Activated CD4-positive, alpha-beta T cell treated with anti-CD3 and anti-CD28 coated beads for 36 hours (primary cell): ENCODE measurements at regions of chr16 and their contacts with region 1.

Region 1: GRCh38 chr16:29848420-29849297 is 14.4 kb downstream of the CDIPT start:
- DNase-seq: peak; percentile 93
- ATAC-seq: peak; percentile 97
- H3K4me3 Mint-ChIP-seq: no peak overlapping the region
- H3K27ac Mint-ChIP-seq: no peak overlapping the region
- H3K4me1 Mint-ChIP-seq: peaks cover 7% of the 10 kb centered on the region
- H3K27me3 Mint-ChIP-seq: no peaks in the 10 kb centered on the region

Region 2: DNA sequence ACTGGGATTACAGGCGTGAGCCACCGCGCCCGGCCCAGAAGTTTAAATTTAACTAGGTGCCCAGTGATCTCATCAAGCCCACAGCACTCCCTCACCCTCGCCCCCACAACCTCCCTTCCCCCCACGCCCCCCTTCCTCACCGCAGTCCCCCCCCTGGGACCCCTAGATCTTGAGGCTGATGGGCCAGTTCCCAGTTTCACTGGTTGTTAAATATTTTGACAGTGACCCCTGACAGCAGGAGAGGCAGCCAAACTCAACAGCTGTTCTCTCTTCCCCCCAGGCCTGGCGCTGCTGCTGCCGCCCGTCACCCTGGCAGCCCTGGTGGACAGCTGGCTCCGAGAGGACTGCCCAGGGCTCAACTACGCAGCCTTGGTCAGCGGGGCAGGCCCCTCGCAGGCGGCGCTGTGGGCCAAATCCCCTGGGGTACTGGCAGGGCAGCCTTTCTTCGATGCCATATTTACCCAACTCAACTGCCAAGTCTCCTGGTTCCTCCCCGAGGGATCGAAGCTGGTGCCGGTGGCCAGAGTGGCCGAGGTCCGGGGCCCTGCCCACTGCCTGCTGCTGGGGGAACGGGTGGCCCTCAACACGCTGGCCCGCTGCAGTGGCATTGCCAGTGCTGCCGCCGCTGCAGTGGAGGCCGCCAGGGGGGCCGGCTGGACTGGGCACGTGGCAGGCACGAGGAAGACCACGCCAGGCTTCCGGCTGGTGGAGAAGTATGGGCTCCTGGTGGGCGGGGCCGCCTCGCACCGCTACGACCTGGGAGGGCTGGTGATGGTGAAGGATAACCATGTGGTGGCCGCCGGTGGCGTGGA is 154.1 kb before region 1 on chr16:
- CTCF ChIA-PET with region 1: interaction called, 45 read pairs
- POLR2A ChIA-PET with region 1: no interaction called
- intact Hi-C with region 1: loop called in 1 of 2 experiments (anchors 2 kb)
- DNase-seq: no peak
- ATAC-seq: no peak
- H3K4me3 Mint-ChIP-seq: no peak overlapping the region
- H3K27ac Mint-ChIP-seq: no peak overlapping the region
- H3K4me1 Mint-ChIP-seq: no peaks in the 10 kb centered on the region
- H3K27me3 Mint-ChIP-seq: no peaks in the 10 kb centered on the region

Region 3: DNA sequence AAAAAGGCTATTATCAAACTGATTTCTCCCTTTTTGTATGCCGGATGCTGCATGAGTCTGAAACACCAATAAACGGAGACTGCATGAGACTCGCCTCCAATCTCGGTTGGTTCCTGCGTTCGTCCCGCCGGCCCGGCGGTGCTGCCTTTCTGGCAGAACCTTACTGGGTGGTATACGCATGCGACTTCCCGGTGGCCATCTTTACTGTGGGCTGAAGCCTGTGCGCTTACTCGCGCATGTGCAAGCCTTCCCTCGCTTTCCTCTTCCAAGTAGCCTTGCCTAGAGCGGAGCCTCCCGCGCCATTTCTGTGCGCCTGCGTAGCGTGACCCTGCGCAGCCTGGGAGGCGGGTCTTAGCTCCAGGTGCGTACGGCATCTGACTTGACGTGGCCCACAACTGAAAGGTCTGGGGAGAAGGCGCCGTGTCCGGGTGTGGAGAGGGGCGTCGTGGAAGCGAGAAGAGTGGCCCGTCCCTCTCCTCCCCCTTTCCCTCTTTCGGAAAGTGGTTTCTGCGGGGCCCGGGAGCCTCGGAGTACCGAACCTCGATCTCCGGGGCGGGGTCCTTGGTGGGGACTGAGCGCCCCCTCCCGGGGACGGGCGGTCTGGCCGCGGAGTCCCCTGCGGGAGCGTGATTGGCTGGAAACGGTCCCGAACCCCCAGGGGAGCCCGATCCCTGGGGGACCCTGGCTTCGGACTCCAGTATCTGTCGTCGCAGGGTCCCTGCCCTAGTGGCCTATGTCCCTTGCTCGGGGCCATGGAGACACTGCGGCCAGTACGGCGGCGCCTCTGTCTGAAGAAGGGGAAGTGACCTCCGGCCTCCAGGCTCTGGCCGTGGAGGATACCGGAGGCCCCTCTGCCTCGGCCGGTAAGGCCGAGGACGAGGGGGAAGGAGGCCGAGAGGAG is 32.6 kb before region 1 on chr16 and contains the start of gene PAGR1:
- CTCF ChIA-PET with region 1: interaction called, 23 read pairs
- POLR2A ChIA-PET with region 1: interaction called, 10 read pairs
- intact Hi-C with region 1: loop called in 1 of 2 experiments (anchors 1 kb)
- DNase-seq: peak; percentile 99
- ATAC-seq: peak; percentile 72
- H3K4me3 Mint-ChIP-seq: peak within 1 kb of the TSS; percentile 84
- H3K27ac Mint-ChIP-seq: peak within 1 kb of the TSS; percentile 97
- H3K4me1 Mint-ChIP-seq: peaks cover 57% of the 10 kb centered on the region
- H3K27me3 Mint-ChIP-seq: no peaks in the 10 kb centered on the region
- total RNA-seq, gene PAGR1: 20.6 to 25.6 TPM

Region 4: DNA sequence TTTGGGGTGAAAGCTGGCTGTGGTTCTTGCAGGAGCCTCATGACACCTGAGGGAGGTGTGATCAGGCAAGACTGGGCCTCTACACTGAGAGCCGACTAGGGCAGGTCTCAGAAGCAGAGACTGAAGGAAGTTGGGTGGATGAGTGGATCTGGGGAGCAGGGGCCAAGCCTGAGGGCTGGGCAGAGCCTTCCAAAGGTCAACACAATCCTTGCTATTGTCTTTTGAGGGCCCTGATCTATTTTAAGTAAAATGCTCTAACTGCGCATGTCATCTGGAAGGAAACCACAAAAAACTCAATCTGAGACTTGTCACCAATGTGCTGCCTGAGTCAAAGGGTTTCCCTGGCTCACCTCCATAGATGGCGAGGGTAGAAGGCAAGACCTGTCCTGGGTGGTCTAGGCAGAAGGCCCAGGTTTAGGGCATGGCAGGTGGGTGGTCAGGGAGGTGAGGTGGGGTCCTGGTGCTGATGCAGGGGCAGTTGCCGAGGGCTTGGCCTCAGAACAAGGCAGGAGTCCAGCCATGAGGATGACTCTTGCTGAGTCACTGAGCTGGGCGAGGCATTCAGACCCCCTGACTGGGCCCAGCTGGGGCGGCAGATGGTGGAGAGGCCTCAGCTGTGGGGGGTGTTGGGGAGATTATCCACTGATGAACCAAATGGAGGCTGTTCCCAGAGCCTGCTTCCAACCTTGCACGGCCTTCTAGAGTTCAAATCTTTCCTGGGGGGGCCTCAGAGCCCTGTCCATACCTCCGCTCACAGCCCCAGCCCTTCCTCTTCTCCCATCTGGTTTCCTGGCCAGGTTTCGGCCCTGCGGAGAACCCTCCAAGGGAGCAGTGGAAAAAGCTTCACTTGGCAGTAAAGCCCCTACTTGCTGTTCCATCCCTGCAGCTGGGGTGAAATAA is 23.3 kb before region 1 on chr16:
- CTCF ChIA-PET with region 1: interaction called, 53 read pairs
- POLR2A ChIA-PET with region 1: interaction called, 3 read pairs
- intact Hi-C with region 1: no loop called
- DNase-seq: peak; percentile 72
- ATAC-seq: peak; percentile 57
- H3K4me3 Mint-ChIP-seq: peak overlapping the region; percentile 53
- H3K27ac Mint-ChIP-seq: peak overlapping the region; percentile 91
- H3K4me1 Mint-ChIP-seq: peaks cover 78% of the 10 kb centered on the region
- H3K27me3 Mint-ChIP-seq: no peaks in the 10 kb centered on the region

Region 5: DNA sequence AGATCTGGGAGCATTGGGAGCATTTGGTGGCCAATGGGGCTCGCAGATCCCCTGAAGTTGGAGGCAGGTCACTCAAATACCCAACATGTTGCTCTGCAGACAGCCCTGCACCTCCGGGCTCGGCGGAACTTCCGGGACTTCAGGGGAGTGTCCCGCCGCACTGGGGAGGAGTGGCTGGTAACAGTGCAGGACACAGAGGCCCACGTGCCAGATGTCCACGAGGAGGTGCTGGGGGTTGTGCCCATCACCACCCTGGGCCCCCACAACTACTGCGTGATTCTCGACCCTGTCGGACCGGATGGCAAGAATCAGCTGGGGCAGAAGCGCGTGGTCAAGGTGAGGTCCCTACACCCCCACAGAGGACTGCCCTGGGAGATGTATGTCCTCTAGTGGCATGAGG is 12.0 kb before region 1 on chr16:
- CTCF ChIA-PET with region 1: interaction called, 12 read pairs
- POLR2A ChIA-PET with region 1: interaction called, 4 read pairs
- intact Hi-C with region 1: no loop called
- DNase-seq: no peak
- ATAC-seq: no peak
- H3K4me3 Mint-ChIP-seq: no peak overlapping the region
- H3K27ac Mint-ChIP-seq: no peak overlapping the region
- H3K4me1 Mint-ChIP-seq: peaks cover 8% of the 10 kb centered on the region
- H3K27me3 Mint-ChIP-seq: no peaks in the 10 kb centered on the region

Region 6: GRCh38 chr16:29900102-29900887 is 51.6 kb after region 1 on chr16 and contains the start of gene ASPHD1:
- CTCF ChIA-PET with region 1: interaction called, 9 read pairs
- POLR2A ChIA-PET with region 1: no interaction called
- intact Hi-C with region 1: loop called in 1 of 2 experiments (anchors 5 kb)
- DNase-seq: peak; percentile 84
- ATAC-seq: peak; percentile 92
- H3K4me3 Mint-ChIP-seq: peak within 1 kb of the TSS; percentile 74
- H3K27ac Mint-ChIP-seq: peak within 1 kb of the TSS; percentile 38
- H3K4me1 Mint-ChIP-seq: peaks cover 13% of the 10 kb centered on the region
- H3K27me3 Mint-ChIP-seq: peaks cover 21% of the 10 kb centered on the region
- total RNA-seq, gene ASPHD1: 2.7 to 3.2 TPM

Region 7: GRCh38 chr16:29943846-29944669 is 95.4 kb after region 1 on chr16:
- CTCF ChIA-PET with region 1: no interaction called
- POLR2A ChIA-PET with region 1: no interaction called
- intact Hi-C with region 1: loop called in 1 of 2 experiments (anchors 5 kb)
- DNase-seq: no peak
- ATAC-seq: no peak
- H3K4me3 Mint-ChIP-seq: no peak overlapping the region
- H3K27ac Mint-ChIP-seq: no peak overlapping the region
- H3K4me1 Mint-ChIP-seq: peaks cover 2% of the 10 kb centered on the region
- H3K27me3 Mint-ChIP-seq: peaks cover 3% of the 10 kb centered on the region

Region 8: DNA sequence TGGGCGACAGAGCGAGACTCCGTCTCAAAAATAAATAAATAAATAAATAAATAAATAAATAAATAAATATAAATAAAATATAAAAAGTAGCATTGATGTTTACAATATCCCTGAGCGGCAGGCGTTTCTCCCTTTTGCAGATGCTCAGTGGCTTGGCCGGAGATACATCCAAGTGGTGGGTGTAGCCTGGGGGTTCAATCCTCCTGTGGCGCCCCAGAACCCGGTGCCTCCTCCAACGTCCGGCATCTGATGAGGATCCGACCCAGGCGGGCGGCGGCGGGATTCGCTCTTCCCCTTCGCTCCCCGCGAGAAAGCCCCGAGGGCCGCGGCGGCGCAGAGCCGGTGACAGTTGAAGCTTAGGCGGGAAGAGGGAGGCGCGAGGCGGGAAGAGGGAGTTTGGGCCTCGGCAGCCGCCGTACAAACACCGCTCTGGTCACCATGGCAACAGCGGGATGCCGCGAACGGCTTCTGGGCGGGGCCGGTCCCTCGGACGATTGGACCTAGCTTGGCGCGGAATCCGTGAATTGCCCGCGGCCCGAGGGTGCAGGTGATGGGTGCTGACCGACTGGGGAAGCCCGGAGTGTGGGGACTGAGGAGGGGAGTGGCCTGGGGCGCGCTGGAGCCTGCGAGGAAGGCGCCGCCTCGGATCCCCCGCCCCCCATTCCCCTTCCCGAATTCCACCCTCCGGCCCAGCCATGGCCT is 204.2 kb after region 1 on chr16:
- CTCF ChIA-PET with region 1: no interaction called
- POLR2A ChIA-PET with region 1: no interaction called
- intact Hi-C with region 1: no loop called
- DNase-seq: peak; percentile 95
- ATAC-seq: peak; percentile 69
- H3K4me3 Mint-ChIP-seq: peak overlapping the region; percentile 78
- H3K27ac Mint-ChIP-seq: peak overlapping the region; percentile 72
- H3K4me1 Mint-ChIP-seq: peaks cover 25% of the 10 kb centered on the region
- H3K27me3 Mint-ChIP-seq: peaks cover 2% of the 10 kb centered on the region

Region 9: DNA sequence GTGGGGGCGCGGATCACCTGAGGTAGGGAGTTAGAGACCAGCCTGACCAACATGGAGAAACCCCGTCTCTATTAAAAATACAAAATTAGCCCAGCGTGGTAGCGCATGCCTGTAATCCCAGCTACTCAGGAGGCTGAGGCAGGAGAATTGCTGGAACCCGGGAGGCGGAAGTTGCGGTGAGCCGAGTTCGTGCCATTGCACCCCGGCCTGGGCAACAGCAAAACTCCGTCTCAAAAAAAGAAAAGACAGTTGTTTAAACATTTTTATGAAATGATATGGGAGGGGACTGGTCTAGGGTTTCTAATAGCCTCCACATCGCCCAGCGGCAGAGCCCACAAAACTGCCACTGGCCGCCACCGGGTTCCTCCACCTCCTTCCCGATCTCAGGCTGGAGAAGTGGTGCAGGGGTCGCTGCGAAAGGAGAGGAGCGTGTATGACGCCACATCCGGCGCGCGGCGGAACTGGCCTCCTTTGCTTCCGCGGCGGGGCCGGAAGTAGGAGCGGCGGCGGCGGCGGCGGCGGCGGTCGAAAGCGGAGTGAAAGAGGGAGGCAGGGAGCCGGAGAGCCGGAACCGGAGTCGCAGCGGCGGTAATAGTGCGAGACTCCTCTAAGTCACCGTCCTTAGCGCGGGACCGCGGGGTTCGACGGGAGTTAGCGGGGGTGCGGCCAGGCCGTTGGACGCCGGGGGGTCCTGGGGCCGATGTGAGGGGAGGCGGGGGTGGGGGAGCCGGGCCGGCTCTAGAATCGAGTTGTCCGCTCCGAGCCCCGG is 227.0 kb after region 1 on chr16 and contains the start of gene PPP4C:
- CTCF ChIA-PET with region 1: no interaction called
- POLR2A ChIA-PET with region 1: no interaction called
- intact Hi-C with region 1: no loop called
- DNase-seq: peak; percentile 96
- ATAC-seq: peak; percentile 82
- H3K4me3 Mint-ChIP-seq: peak within 1 kb of the TSS; percentile 89
- H3K27ac Mint-ChIP-seq: peak within 1 kb of the TSS; percentile 91
- H3K4me1 Mint-ChIP-seq: peaks cover 26% of the 10 kb centered on the region
- H3K27me3 Mint-ChIP-seq: no peaks in the 10 kb centered on the region
- total RNA-seq, gene PPP4C: 106 to 113 TPM